ENCODE measurements at regions of chr18 and their contacts with region 1.

Region 1: GRCh38 chr18:3604498-3605408 is 154.8 kb downstream of the TGIF1 start:
- H3K4me3 ChIP-seq: peak overlapping the region; percentile 21
- H3K27ac ChIP-seq: peak overlapping the region; percentile 86
- H3K4me1 ChIP-seq: peaks cover 16% of the 10 kb centered on the region
- CTCF ChIP-seq: no peak

Region 2: DNA sequence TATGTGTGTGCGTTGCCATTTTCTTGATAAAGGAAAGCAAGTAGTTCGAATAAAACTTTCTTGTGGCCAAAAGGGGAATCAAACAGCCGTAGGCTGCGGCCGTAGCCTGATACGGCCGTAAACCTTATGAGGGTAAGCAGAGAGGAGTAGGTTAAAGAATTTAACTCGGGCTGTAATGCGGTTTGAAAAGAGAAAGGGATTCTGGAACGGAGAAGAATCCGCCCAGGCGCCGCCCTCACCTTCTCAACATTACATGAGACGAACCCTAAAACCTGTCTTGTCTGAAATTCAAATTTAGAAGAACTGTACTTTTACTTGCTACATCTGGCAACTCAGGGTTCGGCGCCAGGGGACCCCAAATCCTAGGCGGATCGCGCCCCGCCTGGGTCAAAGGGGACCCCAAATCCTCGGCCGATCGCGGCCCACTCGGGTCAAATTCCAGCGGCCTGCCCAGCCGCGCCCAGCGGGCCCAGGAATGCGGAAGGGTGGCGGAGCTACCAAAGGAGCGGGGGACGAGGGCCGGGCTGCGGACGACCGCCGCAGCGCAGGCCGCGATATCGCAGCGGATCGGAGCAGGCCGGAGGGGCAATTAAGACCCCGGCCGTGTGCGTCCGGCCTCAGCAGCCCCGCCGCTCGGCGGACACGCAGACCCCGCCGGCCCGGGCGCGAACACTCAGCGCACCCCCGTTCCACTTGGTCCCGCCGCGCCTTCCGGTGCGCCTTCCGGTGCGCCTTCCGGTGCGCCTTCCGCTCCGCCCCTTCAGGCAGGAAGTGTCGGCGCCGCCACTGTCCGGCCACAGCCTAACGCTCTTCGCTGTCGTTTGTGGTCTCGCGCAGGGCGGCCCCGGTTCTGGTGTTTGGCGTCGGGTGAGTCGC is 343.1 kb before region 1 on chr18 and contains the start of gene MYL12B:
- CTCF ChIA-PET with region 1: no interaction called
- POLR2A ChIA-PET with region 1: interaction called, 10 read pairs
- H3K4me3 ChIP-seq: peak within 1 kb of the TSS; percentile 80
- H3K27ac ChIP-seq: peak within 1 kb of the TSS; percentile 97
- H3K4me1 ChIP-seq: peaks cover 19% of the 10 kb centered on the region
- CTCF ChIP-seq: peak; percentile 49; the same call in 1 of the 2 replicates

Region 3: GRCh38 chr18:3623769-3624545 is 19.2 kb after region 1 on chr18:
- CTCF ChIA-PET with region 1: interaction called, 5 read pairs
- POLR2A ChIA-PET with region 1: interaction called, 37 read pairs
- H3K4me3 ChIP-seq: no peak overlapping the region; the same call in 1 of the 2 replicates
- H3K27ac ChIP-seq: peak overlapping the region; percentile 41; the same call in 1 of the 2 replicates
- H3K4me1 ChIP-seq: peaks cover 16% of the 10 kb centered on the region
- CTCF ChIP-seq: no peak

Region 4: GRCh38 chr18:3675446-3675845 is 70.7 kb after region 1 on chr18:
- CTCF ChIA-PET with region 1: no interaction called
- POLR2A ChIA-PET with region 1: no interaction called
- H3K4me3 ChIP-seq: no peak overlapping the region
- H3K27ac ChIP-seq: no peak overlapping the region
- H3K4me1 ChIP-seq: peaks cover 8% of the 10 kb centered on the region; the same call in 1 of the 2 replicates
- CTCF ChIP-seq: no peak